Activated CD4-positive, alpha-beta memory T cell treated with anti-CD3 and anti-CD28 coated beads, Interleukin-2, amount 10 ng/mL, durations not matched to agents 7 days and 5 days (primary cell): ENCODE measurements at regions of chr1 and their contacts with region 1.

Region 1: GRCh38 chr1:6889875-6890480 is 104.7 kb downstream of the CAMTA1 start:
- DNase-seq: peak; percentile 43
- H3K4me3 Mint-ChIP-seq: no peak overlapping the region
- H3K27ac Mint-ChIP-seq: no peak overlapping the region
- H3K4me1 Mint-ChIP-seq: peaks cover 2% of the 10 kb centered on the region
- H3K27me3 Mint-ChIP-seq: no peaks in the 10 kb centered on the region

Region 2: DNA sequence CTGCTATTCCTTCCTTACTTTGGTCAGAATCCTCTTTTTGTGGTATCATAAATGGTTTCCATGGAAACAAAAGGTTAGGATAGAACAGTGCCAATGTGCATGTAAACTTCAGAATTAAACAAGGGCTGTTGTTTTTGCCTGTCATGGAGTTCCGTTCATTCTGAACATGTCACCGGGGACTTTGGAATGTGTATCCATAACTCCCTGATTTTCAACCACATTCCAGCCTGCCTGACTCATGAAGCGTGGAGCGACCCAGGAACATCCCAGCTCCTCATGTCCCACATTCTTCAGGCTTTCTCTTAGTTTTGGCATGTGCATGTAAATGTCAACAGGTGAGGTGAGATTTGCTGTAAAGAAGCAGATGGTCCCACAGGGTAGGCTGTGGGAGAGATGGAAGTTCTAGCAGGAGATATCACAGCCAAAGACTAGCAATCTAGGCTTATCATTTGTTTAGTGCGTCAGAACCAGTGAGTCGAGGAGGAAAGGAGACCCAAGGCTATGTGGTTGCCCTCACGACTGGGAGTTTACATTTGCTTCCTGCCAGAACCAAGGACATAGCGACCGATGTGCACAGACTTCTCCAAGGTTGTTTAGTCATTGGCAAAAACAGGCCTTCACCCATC is 165.3 kb before region 1 on chr1:
- CTCF ChIA-PET with region 1: interaction called, 16 read pairs
- POLR2A ChIA-PET with region 1: no interaction called
- DNase-seq: no peak
- H3K4me3 Mint-ChIP-seq: no peak overlapping the region
- H3K27ac Mint-ChIP-seq: no peak overlapping the region
- H3K4me1 Mint-ChIP-seq: no peaks in the 10 kb centered on the region
- H3K27me3 Mint-ChIP-seq: peaks cover 3% of the 10 kb centered on the region

Region 3: DNA sequence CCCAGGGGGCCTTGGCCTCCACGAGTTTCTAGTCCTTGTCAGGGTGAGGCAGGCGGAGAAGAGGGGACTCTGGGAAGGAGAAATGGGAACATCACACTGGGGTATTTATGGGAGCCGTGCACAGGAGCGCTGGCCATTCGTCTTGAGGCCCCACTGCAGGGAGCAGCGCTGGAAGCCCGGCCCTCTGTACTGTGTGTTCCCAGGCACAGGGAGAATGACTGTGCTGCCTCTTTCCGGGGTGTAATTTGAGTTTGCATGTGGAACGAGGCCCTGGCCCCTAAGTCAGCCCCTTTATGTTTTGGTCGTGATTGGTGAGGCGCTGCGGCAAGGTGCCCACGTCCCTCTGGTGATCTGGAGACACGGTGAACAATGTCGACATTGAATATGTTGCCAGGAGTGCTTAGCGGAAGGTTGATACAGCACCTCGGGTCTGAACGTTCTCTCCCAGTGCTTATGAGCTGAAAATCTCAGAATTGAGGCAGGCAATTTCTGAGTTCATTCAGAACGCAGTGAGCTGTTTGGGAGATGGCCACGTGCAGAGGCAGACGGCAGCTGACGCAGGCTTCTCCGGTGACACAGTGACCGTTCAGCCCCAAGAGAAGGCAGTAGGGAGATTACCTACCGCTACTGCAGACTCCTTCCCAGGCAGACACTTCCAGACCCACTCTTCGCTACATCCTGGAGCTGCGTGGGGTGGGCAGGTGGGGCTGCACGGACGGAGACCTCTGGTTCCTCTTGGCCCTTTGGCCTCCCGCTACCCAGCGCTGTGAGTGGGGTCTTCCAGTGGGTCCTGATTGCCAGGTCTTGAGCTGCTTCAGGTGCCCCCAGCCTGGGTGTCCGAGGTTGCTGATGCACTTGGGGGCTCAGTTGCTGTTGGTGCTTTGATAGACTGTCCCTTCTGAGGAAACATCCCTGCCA is 161.0 kb after region 1 on chr1:
- CTCF ChIA-PET with region 1: no interaction called
- POLR2A ChIA-PET with region 1: no interaction called
- DNase-seq: no peak
- H3K4me3 Mint-ChIP-seq: no peak overlapping the region
- H3K27ac Mint-ChIP-seq: no peak overlapping the region
- H3K4me1 Mint-ChIP-seq: no peaks in the 10 kb centered on the region
- H3K27me3 Mint-ChIP-seq: no peaks in the 10 kb centered on the region